ENCODE measurements at regions of chr11 and their contacts with region 1.

Region 1: GRCh38 chr11:70082829-70083228 is 4.7 kb downstream of the ANO1 start:
- DNase-seq: peak; percentile 45
- ATAC-seq: no peak
- H3K4me3 ChIP-seq: no peak overlapping the region
- H3K27ac ChIP-seq: no peak overlapping the region
- H3K4me1 ChIP-seq: peaks cover 47% of the 10 kb centered on the region
- H3K27me3 ChIP-seq: no peaks in the 10 kb centered on the region
- CTCF ChIP-seq: peak; percentile 75

Region 2: GRCh38 chr11:69949327-69949726 is 133.5 kb before region 1 on chr11:
- CTCF ChIA-PET with region 1: no interaction called
- POLR2A ChIA-PET with region 1: no interaction called
- intact Hi-C with region 1: loop called (anchors 2 kb)
- DNase-seq: peak; percentile 99
- ATAC-seq: peak; percentile 81
- H3K4me3 ChIP-seq: no peak overlapping the region
- H3K27ac ChIP-seq: peak overlapping the region; percentile 97
- H3K4me1 ChIP-seq: peaks cover 45% of the 10 kb centered on the region
- H3K27me3 ChIP-seq: no peaks in the 10 kb centered on the region
- CTCF ChIP-seq: no peak

Region 3: GRCh38 chr11:70016666-70017367 is 66.0 kb before region 1 on chr11:
- CTCF ChIA-PET with region 1: no interaction called
- POLR2A ChIA-PET with region 1: no interaction called
- intact Hi-C with region 1: loop called (anchors 1 kb)
- DNase-seq: peak; percentile 100
- ATAC-seq: peak; percentile 97
- H3K4me3 ChIP-seq: no peak overlapping the region
- H3K27ac ChIP-seq: peak overlapping the region; percentile 95
- H3K4me1 ChIP-seq: peaks cover 30% of the 10 kb centered on the region
- H3K27me3 ChIP-seq: no peaks in the 10 kb centered on the region
- CTCF ChIP-seq: no peak

Region 4: GRCh38 chr11:70158201-70158600 is 75.4 kb after region 1 on chr11:
- CTCF ChIA-PET with region 1: no interaction called
- POLR2A ChIA-PET with region 1: interaction called, 3 read pairs
- intact Hi-C with region 1: loop called (anchors 5 kb)
- DNase-seq: peak; percentile 30
- ATAC-seq: no peak; the same call in 1 of the 2 replicates
- H3K4me3 ChIP-seq: no peak overlapping the region
- H3K27ac ChIP-seq: peak overlapping the region; percentile 97
- H3K4me1 ChIP-seq: peaks cover 30% of the 10 kb centered on the region
- H3K27me3 ChIP-seq: no peaks in the 10 kb centered on the region
- CTCF ChIP-seq: peak; percentile 60

Region 5: DNA sequence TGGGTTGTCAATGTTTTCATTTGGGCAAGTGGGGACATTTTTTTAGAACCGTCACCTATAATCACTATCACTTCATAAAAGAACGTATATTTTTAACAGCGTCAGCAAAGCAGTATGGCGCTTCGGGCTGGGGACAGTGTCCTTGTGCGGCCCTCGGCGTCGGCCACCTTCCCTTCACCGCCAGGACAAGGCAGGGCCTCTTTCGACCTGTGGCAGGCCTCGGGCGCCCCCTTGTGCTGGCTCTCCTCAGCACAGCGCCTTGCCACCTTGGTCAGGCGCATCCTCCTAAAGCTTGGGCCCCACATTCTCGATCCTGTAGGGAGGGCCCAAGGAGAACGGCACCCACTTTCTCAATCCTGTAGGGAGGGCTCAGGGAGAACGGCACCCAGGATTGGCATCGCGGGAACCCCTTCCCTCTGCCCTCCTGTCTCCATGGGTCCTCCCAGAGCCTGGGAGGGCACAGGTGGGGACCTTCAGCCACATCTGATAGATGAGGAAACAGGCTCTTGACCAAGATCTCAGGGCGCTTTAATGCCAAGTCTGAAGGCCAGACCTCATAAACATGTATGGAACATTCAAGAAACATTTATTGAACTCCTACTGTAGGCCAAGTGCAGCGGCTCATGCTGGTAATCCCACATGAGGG is 108.8 kb after region 1 on chr11:
- CTCF ChIA-PET with region 1: no interaction called
- POLR2A ChIA-PET with region 1: no interaction called
- intact Hi-C with region 1: loop called (anchors 10 kb)
- DNase-seq: peak; percentile 84
- ATAC-seq: peak; percentile 80
- H3K4me3 ChIP-seq: no peak overlapping the region
- H3K27ac ChIP-seq: no peak overlapping the region
- H3K4me1 ChIP-seq: peaks cover 8% of the 10 kb centered on the region; the same call in 1 of the 2 replicates
- H3K27me3 ChIP-seq: no peaks in the 10 kb centered on the region
- CTCF ChIP-seq: peak; percentile 98

Measured in PC-3 (cell line).